IMR-90 (cell line): ENCODE measurements at regions of chr3 and their contacts with region 1.

Region 1: DNA sequence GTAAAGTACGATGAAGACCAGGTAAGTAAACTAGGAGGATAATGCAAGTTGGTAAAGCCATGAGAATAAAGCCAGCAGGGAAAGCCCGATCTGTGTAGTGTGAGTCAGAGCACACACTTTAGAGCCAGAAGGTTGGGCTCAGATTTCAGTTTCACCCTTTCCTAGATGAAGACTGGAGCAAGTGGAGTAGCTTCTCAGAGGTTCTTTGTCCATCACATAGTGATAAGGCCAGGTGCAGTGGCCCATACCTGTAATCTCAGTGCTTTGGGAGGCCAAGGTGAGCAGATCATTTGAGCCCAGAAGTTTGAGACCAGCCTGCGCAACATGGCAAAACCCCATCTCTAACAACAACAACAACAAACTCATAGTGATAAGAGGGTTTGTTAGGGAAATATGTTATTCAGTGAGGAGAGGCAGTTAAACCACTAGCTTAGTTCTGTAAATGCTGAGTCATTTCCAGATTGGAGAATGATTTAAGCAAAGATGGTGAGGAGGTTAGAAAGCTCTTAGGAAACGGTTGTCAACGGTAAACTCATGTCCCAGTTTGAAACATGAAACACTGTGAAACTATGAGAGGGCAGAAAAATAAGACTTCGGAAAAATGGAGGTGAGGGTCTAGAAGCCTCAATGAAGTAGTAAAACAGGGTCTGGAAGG is 39.0 kb downstream of the IL12A start:
- DNase-seq: peak; percentile 88
- ATAC-seq: peak; percentile 79
- H3K4me3 ChIP-seq: no peak overlapping the region
- H3K27ac ChIP-seq: peak overlapping the region; percentile 93
- H3K4me1 ChIP-seq: peaks cover 14% of the 10 kb centered on the region
- H3K27me3 ChIP-seq: no peaks in the 10 kb centered on the region
- CTCF ChIP-seq: no peak
- POLR2A ChIP-seq: peak; percentile 53; the same call in 1 of the 2 replicates
- RAD21 ChIP-seq: no peak

Region 2: GRCh38 chr3:159813822-159814523 is 213.7 kb before region 1 on chr3:
- CTCF ChIA-PET with region 1: no interaction called
- POLR2A ChIA-PET with region 1: no interaction called
- dilution Hi-C with region 1: no loop called
- in situ Hi-C with region 1: no loop called
- intact Hi-C with region 1: no loop called
- DNase-seq: peak; percentile 42
- ATAC-seq: peak; percentile 74
- H3K4me3 ChIP-seq: no peak overlapping the region
- H3K27ac ChIP-seq: no peak overlapping the region
- H3K4me1 ChIP-seq: peaks cover 13% of the 10 kb centered on the region
- H3K27me3 ChIP-seq: no peaks in the 10 kb centered on the region
- CTCF ChIP-seq: no peak
- POLR2A ChIP-seq: no peak
- RAD21 ChIP-seq: no peak

Region 3: DNA sequence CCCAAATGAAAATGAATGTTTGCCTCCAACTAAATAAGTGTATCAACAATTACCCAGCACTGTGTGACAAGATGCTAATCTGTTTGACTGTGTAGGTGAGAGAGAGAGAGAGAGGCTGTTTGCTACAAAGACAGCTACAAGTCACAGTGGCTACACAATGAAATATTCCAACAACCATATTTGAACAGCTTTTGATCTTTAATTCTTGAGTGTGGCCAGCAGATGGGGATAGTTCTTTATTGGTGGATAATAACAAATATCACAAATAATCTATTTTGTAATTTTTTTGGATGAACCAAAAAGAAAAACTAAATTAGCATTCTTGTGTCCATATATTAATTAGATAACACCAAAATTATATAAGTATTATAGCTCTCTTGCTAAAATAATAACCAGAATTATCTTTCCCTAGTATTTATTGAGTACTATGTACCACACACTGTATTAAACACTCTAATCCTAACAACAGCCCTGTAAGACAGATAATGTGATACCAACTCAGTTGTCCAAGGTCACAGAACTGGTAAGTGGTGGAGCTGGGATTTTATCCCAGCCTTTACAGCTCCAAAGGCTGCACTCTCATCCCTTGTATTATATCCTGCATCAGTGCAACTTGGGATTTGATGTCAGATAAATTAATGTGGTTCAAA is 135.7 kb after region 1 on chr3:
- CTCF ChIA-PET with region 1: interaction called, 10 read pairs
- POLR2A ChIA-PET with region 1: no interaction called
- dilution Hi-C with region 1: no loop called
- in situ Hi-C with region 1: no loop called
- intact Hi-C with region 1: loop called (anchors 5 kb)
- DNase-seq: peak; percentile 47
- ATAC-seq: peak; percentile 72
- H3K4me3 ChIP-seq: no peak overlapping the region
- H3K27ac ChIP-seq: no peak overlapping the region
- H3K4me1 ChIP-seq: no peaks in the 10 kb centered on the region
- H3K27me3 ChIP-seq: no peaks in the 10 kb centered on the region
- CTCF ChIP-seq: peak; percentile 74
- POLR2A ChIP-seq: no peak
- RAD21 ChIP-seq: peak; percentile 69

Region 4: GRCh38 chr3:160210799-160211221 is 183.1 kb after region 1 on chr3:
- CTCF ChIA-PET with region 1: no interaction called
- POLR2A ChIA-PET with region 1: no interaction called
- dilution Hi-C with region 1: no loop called
- in situ Hi-C with region 1: no loop called
- intact Hi-C with region 1: loop called (anchors 5 kb)
- DNase-seq: peak; percentile 73
- ATAC-seq: peak; percentile 82
- H3K4me3 ChIP-seq: no peak overlapping the region
- H3K27ac ChIP-seq: no peak overlapping the region
- H3K4me1 ChIP-seq: no peaks in the 10 kb centered on the region
- H3K27me3 ChIP-seq: peaks cover 7% of the 10 kb centered on the region
- CTCF ChIP-seq: peak; percentile 61
- POLR2A ChIP-seq: no peak
- RAD21 ChIP-seq: peak; percentile 44

Region 5: DNA sequence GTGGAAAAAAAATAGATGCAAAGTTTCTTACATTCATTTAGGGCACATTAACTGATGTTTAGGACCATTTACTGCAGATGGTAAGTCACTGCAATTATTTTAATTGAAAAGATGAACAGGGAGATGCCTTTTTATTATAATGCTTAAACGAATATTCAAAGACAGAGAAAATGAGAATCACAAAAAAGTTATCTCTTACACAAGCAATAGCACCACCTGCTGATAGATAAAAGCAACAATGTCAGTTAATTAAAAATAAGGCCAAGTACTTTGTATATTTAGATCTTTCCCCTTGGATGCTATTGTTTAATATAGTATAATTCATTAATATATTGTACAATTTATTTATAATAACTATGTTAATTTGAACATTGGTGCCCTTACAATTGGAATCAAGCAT is 315.5 kb after region 1 on chr3:
- CTCF ChIA-PET with region 1: interaction called, 3 read pairs
- POLR2A ChIA-PET with region 1: no interaction called
- dilution Hi-C with region 1: no loop called
- in situ Hi-C with region 1: loop called (anchors 10 kb)
- intact Hi-C with region 1: loop called (anchors 1 kb)
- DNase-seq: peak; percentile 49
- ATAC-seq: peak; percentile 40
- H3K4me3 ChIP-seq: no peak overlapping the region
- H3K27ac ChIP-seq: no peak overlapping the region
- H3K4me1 ChIP-seq: peaks cover 2% of the 10 kb centered on the region; the same call in 1 of the 2 replicates
- H3K27me3 ChIP-seq: no peaks in the 10 kb centered on the region
- CTCF ChIP-seq: peak; percentile 71
- POLR2A ChIP-seq: no peak
- RAD21 ChIP-seq: peak; percentile 74

Region 6: DNA sequence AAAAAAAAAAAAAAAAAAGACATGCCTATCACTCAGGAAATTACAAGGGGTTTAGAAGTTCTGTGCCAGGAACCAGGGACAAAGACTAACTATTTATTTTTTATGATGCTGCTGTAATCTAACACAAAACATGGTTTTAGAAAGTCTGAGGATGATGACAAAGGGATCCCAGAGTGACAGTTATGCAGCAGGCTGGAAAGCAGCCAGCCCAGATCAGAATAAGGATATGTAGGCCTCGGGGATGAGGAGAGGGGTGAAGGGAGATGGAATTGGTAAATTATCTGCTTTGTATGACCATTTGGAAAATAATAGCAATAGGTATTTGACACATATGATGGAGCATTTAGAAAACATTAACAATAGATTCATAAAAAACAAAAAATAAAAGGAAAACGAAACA is 1159.4 kb after region 1 on chr3:
- CTCF ChIA-PET with region 1: no interaction called
- POLR2A ChIA-PET with region 1: no interaction called
- dilution Hi-C with region 1: no loop called
- in situ Hi-C with region 1: no loop called
- intact Hi-C with region 1: no loop called
- DNase-seq: no peak
- ATAC-seq: no peak
- H3K4me3 ChIP-seq: no peak overlapping the region
- H3K27ac ChIP-seq: no peak overlapping the region
- H3K4me1 ChIP-seq: no peaks in the 10 kb centered on the region
- H3K27me3 ChIP-seq: no peaks in the 10 kb centered on the region
- CTCF ChIP-seq: no peak
- POLR2A ChIP-seq: no peak
- RAD21 ChIP-seq: no peak

Region 7: DNA sequence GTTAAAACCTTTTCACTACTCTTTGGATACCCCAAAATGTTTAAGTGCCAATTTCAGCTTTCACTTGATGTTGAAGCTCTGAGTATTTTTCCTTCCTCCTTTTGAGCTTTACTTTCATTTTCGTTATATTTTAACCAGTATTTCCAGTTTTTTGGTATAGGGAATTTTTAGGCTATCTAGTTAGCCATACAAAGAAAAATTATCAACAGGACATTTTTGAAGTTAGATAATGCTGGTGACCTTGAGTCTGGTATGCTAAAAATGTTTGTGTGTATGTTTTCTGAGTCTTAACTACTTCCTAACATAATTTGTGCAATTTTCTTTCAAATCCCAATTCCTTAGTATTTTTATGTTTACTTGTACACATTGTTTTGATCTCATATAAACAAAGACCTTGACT is 1753.7 kb after region 1 on chr3:
- CTCF ChIA-PET with region 1: interaction called, 10 read pairs
- POLR2A ChIA-PET with region 1: no interaction called
- dilution Hi-C with region 1: no loop called
- in situ Hi-C with region 1: no loop called
- intact Hi-C with region 1: no loop called
- DNase-seq: no peak
- ATAC-seq: no peak
- H3K4me3 ChIP-seq: no peak overlapping the region
- H3K27ac ChIP-seq: no peak overlapping the region
- H3K4me1 ChIP-seq: no peaks in the 10 kb centered on the region
- H3K27me3 ChIP-seq: no peaks in the 10 kb centered on the region
- CTCF ChIP-seq: no peak
- POLR2A ChIP-seq: no peak
- RAD21 ChIP-seq: no peak